SK-N-SH (cell line): ENCODE measurements at regions of chr6 and their contacts with region 1.

Region 1: DNA sequence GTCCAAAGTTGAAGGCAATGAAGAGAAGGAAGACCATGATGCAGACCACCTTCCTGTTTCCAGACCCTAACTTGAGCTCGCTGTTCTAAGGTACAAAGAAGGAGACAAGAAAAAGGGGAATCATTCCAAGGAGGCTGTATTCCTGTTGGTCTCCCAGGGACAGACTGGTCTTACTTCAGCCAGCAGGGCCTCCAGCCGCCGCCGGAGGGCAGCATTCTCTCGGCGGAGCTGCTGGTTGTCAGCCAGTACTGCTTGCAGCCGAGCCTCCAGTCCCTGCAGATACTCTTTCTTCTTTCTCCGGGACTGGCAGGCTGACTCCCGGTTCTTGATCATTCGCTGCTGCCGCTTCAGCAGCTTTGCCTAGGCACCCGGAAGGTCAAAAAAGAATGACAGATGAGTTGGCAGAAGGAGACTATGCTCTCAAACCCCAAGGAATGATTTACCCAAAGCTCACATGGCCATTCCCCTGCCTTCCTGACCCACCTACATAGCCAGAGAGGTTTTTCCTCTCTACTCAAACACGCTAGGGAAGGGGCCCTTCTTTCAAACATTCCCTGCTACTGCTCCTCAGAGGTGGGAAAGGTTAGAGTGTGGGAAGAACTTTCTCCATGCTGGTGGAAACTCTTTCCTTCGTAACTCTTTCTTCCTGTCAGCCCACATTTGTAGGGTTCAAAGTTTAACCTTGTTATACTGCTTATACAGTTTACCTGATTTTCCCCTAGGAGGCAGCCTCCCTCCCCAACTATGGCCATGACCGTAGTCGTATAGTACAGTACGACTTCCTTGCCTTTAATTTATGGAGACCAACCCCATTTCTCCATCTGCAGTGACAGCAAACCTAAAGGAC is 9.0 kb downstream of the ATF6B start:
- DNase-seq: peak; percentile 83
- H3K4me3 ChIP-seq: no peak overlapping the region; a peak in 1 of 4 replicates
- H3K27ac ChIP-seq: peak overlapping the region; percentile 14 to 29; a peak in 1 of 4 replicates
- H3K4me1 ChIP-seq: peaks cover 1 to 5% of the 10 kb centered on the region in 2 experiments; a peak in 1 of 4 replicates
- H3K27me3 ChIP-seq: no peaks in the 10 kb centered on the region
- CTCF ChIP-seq: peak; percentile 89
- EP300 ChIP-seq: no peak
- RAD21 ChIP-seq: peak; percentile 90

Region 2: GRCh38 chr6:32096394-32097258 is 22.4 kb before region 1 on chr6:
- CTCF ChIA-PET with region 1: interaction called, 33 read pairs
- POLR2A ChIA-PET with region 1: no interaction called
- DNase-seq: peak; percentile 77
- H3K4me3 ChIP-seq: peak overlapping the region in 1 of 2 experiments; percentile 9; a peak in 2 of 4 replicates
- H3K27ac ChIP-seq: no peak overlapping the region
- H3K4me1 ChIP-seq: peaks cover 0 to 9% of the 10 kb centered on the region in 2 experiments; a peak in 1 of 4 replicates
- H3K27me3 ChIP-seq: peaks cover 70% of the 10 kb centered on the region
- CTCF ChIP-seq: peak; percentile 29; the same call in 1 of the 2 replicates
- EP300 ChIP-seq: no peak
- RAD21 ChIP-seq: no peak

Region 3: DNA sequence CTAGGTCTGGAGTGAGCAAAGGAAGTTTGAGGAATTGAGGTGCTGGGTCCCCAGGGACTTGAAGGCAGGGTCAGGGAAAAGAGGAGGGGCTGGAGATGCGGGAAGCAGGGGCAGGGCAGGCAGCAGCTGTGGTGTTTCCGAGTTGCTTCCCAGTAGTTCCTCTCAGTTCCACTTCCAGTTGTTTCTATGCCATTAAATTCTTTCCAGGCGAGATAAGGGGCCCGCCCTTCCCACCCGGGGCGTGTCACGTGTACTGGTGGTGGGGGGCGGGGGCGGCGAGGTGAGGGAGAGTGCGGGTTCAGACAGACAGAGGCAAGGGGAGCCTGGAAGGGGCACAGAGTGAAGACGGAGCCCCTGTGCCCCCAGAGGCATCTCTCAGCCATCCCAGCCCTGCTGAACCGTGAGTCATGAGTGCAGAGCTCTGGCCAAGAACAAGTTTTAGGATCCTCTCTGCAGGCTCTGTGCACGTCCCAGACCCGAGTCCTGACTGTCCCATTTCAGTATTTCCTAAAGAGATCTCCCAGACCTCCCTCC is 10.8 kb before region 1 on chr6:
- CTCF ChIA-PET with region 1: interaction called, 33 read pairs
- POLR2A ChIA-PET with region 1: no interaction called
- DNase-seq: peak; percentile 32
- H3K4me3 ChIP-seq: no peak overlapping the region
- H3K27ac ChIP-seq: no peak overlapping the region
- H3K4me1 ChIP-seq: peaks cover 0 to 9% of the 10 kb centered on the region in 2 experiments; a peak in 3 of 4 replicates
- H3K27me3 ChIP-seq: peaks cover 7% of the 10 kb centered on the region
- CTCF ChIP-seq: no peak
- EP300 ChIP-seq: no peak
- RAD21 ChIP-seq: no peak

Region 4: GRCh38 chr6:32153564-32154513 is 34.8 kb after region 1 on chr6 and contains the start of gene PPT2:
- CTCF ChIA-PET with region 1: interaction called, 30 read pairs
- POLR2A ChIA-PET with region 1: interaction called, 3 read pairs
- DNase-seq: peak; percentile 95
- H3K4me3 ChIP-seq: peak within 1 kb of the TSS; percentile 75 to 81
- H3K27ac ChIP-seq: peak within 1 kb of the TSS; percentile 86 to 95
- H3K4me1 ChIP-seq: peaks cover 13 to 31% of the 10 kb centered on the region in 2 experiments; a peak in 3 of 4 replicates
- H3K27me3 ChIP-seq: no peaks in the 10 kb centered on the region
- CTCF ChIP-seq: peak; percentile 25; the same call in 1 of the 2 replicates
- EP300 ChIP-seq: peak in 1 of 2 experiments; percentile 40; a peak in 2 of 4 replicates
- RAD21 ChIP-seq: no peak; the same call in 1 of the 2 replicates
- polyA plus RNA-seq, gene PPT2: 32.7 and 42.1 TPM in 2 replicates